Heart right ventricle (tissue), 16 donors: ENCODE measurements at regions of chr14 and their contacts with region 1.

Region 1: DNA sequence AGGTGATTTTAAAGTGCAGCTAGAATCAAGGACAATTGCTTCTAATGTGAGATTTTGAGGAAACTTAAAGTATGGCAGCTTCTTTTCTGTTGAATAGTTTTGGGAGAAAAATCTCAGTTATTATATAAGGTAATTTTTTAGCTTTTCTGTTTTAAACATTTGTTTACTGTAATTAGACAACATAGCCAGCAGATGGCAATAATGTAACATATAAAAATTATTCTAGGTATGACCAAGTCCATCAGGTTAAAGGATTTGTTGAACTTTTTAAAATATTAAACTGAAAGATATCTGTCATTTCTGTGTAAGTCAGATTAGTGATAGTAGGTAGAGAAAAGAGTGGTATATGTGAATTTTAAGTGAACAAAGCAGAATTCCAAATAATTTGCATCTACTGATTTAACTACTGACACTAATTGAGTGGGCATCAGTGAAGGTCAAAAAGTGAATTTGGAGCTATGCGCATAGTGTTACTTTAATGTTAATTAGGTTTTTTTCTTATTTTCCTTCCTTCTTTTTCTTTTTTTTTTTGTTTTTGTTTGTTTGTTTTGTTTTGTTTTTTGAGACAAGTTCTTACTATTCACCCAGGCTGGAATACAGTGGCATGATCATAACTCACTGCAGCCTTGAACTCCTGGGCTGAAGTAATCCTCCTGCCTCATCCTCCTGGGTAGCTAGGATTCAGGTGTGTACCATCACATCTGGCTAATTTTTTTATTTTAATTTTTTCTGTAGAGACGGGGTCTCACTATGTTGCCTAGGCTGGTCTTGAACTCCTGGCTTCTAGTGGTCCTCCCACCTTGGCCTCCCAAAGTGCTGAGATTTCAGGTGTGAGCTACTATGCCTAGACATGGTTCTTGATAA is 18.6 kb downstream of the PRORP start:
- DNase-seq: no peak
- ATAC-seq: no peak
- H3K4me3 ChIP-seq: no peak overlapping the region
- H3K27ac ChIP-seq: no peak overlapping the region
- H3K4me1 ChIP-seq: no peaks in the 10 kb centered on the region
- H3K27me3 ChIP-seq: no peaks in the 10 kb centered on the region
- CTCF ChIP-seq: peak in 7 of 9 donors; percentile 35 to 68 (median 59)

Region 2: GRCh38 chr14:35068238-35069012 is 72.5 kb before region 1 on chr14:
- intact Hi-C with region 1: no loop called
- DNase-seq: no peak
- ATAC-seq: no peak
- H3K4me3 ChIP-seq: no peak overlapping the region
- H3K27ac ChIP-seq: no peak overlapping the region
- H3K4me1 ChIP-seq: peaks cover 0 to 2% (median 0%) of the 10 kb centered on the region in 9 donors
- H3K27me3 ChIP-seq: no peaks in the 10 kb centered on the region
- CTCF ChIP-seq: no peak

Region 3: GRCh38 chr14:35215110-35215876 is 74.3 kb after region 1 on chr14:
- intact Hi-C with region 1: loop called in 5 of 10 experiments (anchors 10 kb)
- DNase-seq: peak in 1 of 2 donors; percentile 6
- ATAC-seq: peak in 5 of 8 donors; percentile 52 to 77 (median 64)
- H3K4me3 ChIP-seq: no peak overlapping the region
- H3K27ac ChIP-seq: peak overlapping the region in 4 of 10 donors; percentile 0 to 48 (median 29)
- H3K4me1 ChIP-seq: peaks cover 0 to 20% (median 0%) of the 10 kb centered on the region in 9 donors
- H3K27me3 ChIP-seq: no peaks in the 10 kb centered on the region
- CTCF ChIP-seq: peak; percentile 28 to 78 (median 56)

Region 4: GRCh38 chr14:35390577-35391387 is 249.8 kb after region 1 on chr14:
- intact Hi-C with region 1: no loop called
- DNase-seq: no peak
- ATAC-seq: peak in 1 of 8 donors; percentile 11
- H3K4me3 ChIP-seq: no peak overlapping the region
- H3K27ac ChIP-seq: no peak overlapping the region
- H3K4me1 ChIP-seq: peaks cover 4 to 29% (median 8%) of the 10 kb centered on the region in 9 donors
- H3K27me3 ChIP-seq: no peaks in the 10 kb centered on the region
- CTCF ChIP-seq: no peak

Region 5: GRCh38 chr14:35470755-35471154 is 329.8 kb after region 1 on chr14:
- intact Hi-C with region 1: no loop called
- DNase-seq: no peak
- ATAC-seq: no peak
- H3K4me3 ChIP-seq: no peak overlapping the region
- H3K27ac ChIP-seq: no peak overlapping the region
- H3K4me1 ChIP-seq: no peaks in the 10 kb centered on the region
- H3K27me3 ChIP-seq: peaks cover 0 to 8% (median 0%) of the 10 kb centered on the region in 7 donors
- CTCF ChIP-seq: no peak